ENCODE measurements at regions of chr20 and their contacts with region 1.

Region 1: DNA sequence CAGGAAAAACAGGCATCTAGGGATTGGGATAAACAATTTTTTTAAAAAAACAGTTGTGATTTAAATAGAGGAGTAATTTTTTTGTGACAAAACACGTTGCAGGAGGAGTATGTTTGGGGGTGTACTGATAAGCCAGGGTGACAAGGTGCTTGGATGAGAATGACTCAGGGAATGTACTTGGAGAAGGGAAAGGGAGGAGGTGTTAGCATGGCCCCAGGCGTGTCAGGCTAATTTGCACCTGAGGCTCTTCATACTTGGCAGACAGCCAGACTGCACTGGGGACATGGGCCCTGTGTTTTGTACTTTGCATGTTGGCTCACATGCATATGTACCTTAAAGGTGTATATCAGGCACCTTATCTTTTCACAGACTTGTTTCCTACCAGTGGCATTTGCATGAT is 22.8 kb downstream of the PANK2 start:
- DNase-seq: no peak
- H3K4me3 Mint-ChIP-seq: no peak overlapping the region
- H3K27ac Mint-ChIP-seq: peak overlapping the region; percentile 39
- H3K4me1 Mint-ChIP-seq: peaks cover 61% of the 10 kb centered on the region
- H3K27me3 Mint-ChIP-seq: no peaks in the 10 kb centered on the region

Region 2: GRCh38 chr20:3658716-3659491 is 253.1 kb before region 1 on chr20:
- CTCF ChIA-PET with region 1: no interaction called
- intact Hi-C with region 1: no loop called
- DNase-seq: peak; percentile 45
- H3K4me3 Mint-ChIP-seq: no peak overlapping the region
- H3K27ac Mint-ChIP-seq: no peak overlapping the region
- H3K4me1 Mint-ChIP-seq: peaks cover 4% of the 10 kb centered on the region
- H3K27me3 Mint-ChIP-seq: peaks cover 29% of the 10 kb centered on the region

Region 3: GRCh38 chr20:3795511-3796468 is 116.2 kb before region 1 on chr20 and contains the start of gene CDC25B:
- CTCF ChIA-PET with region 1: no interaction called
- intact Hi-C with region 1: loop called (anchors 5 kb)
- DNase-seq: peak; percentile 95
- H3K4me3 Mint-ChIP-seq: peak within 1 kb of the TSS; percentile 94
- H3K27ac Mint-ChIP-seq: peak within 1 kb of the TSS; percentile 97
- H3K4me1 Mint-ChIP-seq: peaks cover 49% of the 10 kb centered on the region
- H3K27me3 Mint-ChIP-seq: no peaks in the 10 kb centered on the region
- total RNA-seq, gene CDC25B: 94.8 to 97.7 TPM

Region 4: DNA sequence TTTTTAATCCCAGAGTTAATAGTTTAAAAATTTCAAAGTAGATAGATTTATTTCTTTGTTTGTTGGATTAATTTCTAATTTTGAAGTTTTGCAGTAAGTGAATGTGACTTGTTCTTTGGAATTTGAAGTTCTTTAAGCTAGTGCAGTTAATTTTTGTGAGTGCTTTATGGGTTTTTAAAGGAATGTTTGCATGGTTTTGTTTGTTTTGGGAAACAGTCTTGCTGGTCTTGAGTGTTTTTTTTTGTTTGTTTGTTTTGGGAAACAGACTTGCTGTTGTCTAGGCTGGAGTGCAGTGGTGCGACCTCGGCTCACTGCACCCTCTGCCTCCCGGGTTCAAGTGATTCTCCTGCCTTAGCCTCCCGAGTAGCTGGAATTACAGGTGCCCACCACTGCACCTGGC is 13.3 kb before region 1 on chr20:
- CTCF ChIA-PET with region 1: interaction called, 4 read pairs
- intact Hi-C with region 1: loop called (anchors 1 kb)
- DNase-seq: no peak
- H3K4me3 Mint-ChIP-seq: no peak overlapping the region
- H3K27ac Mint-ChIP-seq: no peak overlapping the region
- H3K4me1 Mint-ChIP-seq: peaks cover 73% of the 10 kb centered on the region
- H3K27me3 Mint-ChIP-seq: no peaks in the 10 kb centered on the region

Region 5: GRCh38 chr20:3980260-3981131 is 68.5 kb after region 1 on chr20:
- CTCF ChIA-PET with region 1: interaction called, 6 read pairs
- intact Hi-C with region 1: loop called (anchors 1 kb)
- DNase-seq: peak; percentile 59
- H3K4me3 Mint-ChIP-seq: peak overlapping the region; percentile 62
- H3K27ac Mint-ChIP-seq: peak overlapping the region; percentile 83
- H3K4me1 Mint-ChIP-seq: peaks cover 20% of the 10 kb centered on the region
- H3K27me3 Mint-ChIP-seq: no peaks in the 10 kb centered on the region

Region 6: DNA sequence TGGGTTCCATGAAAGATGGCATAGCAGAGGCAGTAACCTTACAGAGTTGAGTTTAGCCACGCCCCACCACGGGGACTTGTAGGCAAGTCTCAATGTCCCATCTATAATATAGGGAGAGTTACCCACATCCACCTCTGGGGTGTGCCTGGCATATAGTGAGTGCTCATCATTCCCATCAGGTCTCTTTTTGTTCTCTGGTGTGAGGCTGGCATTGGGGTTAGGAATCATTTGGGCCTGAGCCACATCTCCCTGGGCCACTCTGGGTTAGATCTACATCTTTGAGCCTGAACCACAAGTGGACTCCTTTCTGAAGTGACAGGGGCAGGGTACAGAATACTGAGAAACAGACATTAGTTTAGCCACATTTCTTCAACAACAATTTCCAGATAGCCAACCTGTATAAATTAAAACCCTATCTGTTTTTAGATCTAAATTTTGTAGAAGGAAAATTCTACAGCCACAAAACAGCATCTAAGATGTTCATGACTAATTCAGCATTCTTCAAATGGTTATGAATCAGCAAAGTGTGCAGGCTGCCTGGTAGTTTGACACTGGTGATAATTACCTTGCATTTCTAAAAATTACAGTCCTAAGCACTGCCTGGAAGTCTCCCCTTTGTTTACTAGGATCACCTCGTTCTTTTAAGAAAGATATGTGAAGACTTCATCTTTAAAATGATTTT is 83.3 kb after region 1 on chr20:
- CTCF ChIA-PET with region 1: interaction called, 3 read pairs
- intact Hi-C with region 1: loop called (anchors 1 kb)
- DNase-seq: peak; percentile 34
- H3K4me3 Mint-ChIP-seq: no peak overlapping the region
- H3K27ac Mint-ChIP-seq: peak overlapping the region; percentile 68
- H3K4me1 Mint-ChIP-seq: peaks cover 46% of the 10 kb centered on the region
- H3K27me3 Mint-ChIP-seq: no peaks in the 10 kb centered on the region

Region 7: GRCh38 chr20:4014031-4014474 is 102.1 kb after region 1 on chr20:
- CTCF ChIA-PET with region 1: no interaction called
- intact Hi-C with region 1: loop called (anchors 5 kb)
- DNase-seq: peak; percentile 52
- H3K4me3 Mint-ChIP-seq: peak overlapping the region; percentile 81
- H3K27ac Mint-ChIP-seq: no peak overlapping the region
- H3K4me1 Mint-ChIP-seq: peaks cover 32% of the 10 kb centered on the region
- H3K27me3 Mint-ChIP-seq: no peaks in the 10 kb centered on the region

Measured in activated naive CD4-positive, alpha-beta T cell treated with anti-CD3 and anti-CD28 coated beads for 36 hours (primary cell).